A673 (cell line): ENCODE measurements at regions of chr10 and their contacts with region 1.

Region 1: GRCh38 chr10:109203646-109204353 is 719.5 kb downstream of the XPNPEP1 start:
- DNase-seq: peak; percentile 45
- H3K4me3 ChIP-seq: no peak overlapping the region
- H3K27ac ChIP-seq: peak overlapping the region; percentile 74
- H3K4me1 ChIP-seq: peaks cover 53% of the 10 kb centered on the region
- H3K27me3 ChIP-seq: no peaks in the 10 kb centered on the region
- CTCF ChIP-seq: no peak

Region 2: DNA sequence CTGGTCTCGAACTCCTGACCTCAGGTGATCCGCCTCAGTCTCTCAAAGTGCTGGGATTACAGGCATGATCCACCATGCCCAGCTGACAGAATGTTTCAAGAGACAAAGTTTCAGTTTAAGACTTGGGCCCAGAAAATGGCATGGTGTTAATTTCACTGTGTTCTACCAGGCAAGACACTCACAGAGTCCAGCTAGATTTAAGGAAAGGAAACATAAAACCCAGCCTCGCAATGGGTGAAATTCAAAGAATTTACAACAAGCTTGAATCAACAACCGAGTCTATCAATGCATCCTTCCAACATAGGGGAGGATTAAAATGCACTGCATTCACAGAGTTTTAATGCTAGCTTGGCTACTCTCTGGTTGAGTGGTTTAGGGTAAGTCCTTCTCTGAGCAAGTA is 44.4 kb before region 1 on chr10:
- CTCF ChIA-PET with region 1: no interaction called
- POLR2A ChIA-PET with region 1: no interaction called
- intact Hi-C with region 1: no loop called
- DNase-seq: no peak
- H3K4me3 ChIP-seq: no peak overlapping the region
- H3K27ac ChIP-seq: no peak overlapping the region
- H3K4me1 ChIP-seq: no peaks in the 10 kb centered on the region
- H3K27me3 ChIP-seq: no peaks in the 10 kb centered on the region
- CTCF ChIP-seq: no peak

Region 3: DNA sequence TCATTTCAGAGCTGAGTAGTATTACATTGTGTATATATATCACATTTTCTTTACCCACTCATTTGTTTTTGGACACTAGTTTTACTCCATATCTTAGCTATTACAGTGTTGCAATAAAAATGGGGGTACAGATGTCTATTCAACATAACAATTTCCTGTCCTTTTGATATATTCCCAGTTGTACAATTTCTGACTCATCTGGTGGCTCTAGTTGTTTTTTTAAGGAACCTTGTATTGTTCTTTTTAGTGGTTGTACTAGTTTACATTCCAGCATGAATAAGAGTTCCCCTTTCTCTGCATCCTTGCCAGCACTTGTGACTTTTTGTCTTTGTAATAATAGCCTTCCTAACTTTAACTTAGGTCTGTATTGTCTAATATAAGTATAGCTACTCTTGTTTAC is 20.4 kb before region 1 on chr10:
- CTCF ChIA-PET with region 1: no interaction called
- POLR2A ChIA-PET with region 1: no interaction called
- intact Hi-C with region 1: no loop called
- DNase-seq: no peak
- H3K4me3 ChIP-seq: no peak overlapping the region
- H3K27ac ChIP-seq: no peak overlapping the region
- H3K4me1 ChIP-seq: peaks cover 18% of the 10 kb centered on the region
- H3K27me3 ChIP-seq: no peaks in the 10 kb centered on the region
- CTCF ChIP-seq: no peak

Region 4: DNA sequence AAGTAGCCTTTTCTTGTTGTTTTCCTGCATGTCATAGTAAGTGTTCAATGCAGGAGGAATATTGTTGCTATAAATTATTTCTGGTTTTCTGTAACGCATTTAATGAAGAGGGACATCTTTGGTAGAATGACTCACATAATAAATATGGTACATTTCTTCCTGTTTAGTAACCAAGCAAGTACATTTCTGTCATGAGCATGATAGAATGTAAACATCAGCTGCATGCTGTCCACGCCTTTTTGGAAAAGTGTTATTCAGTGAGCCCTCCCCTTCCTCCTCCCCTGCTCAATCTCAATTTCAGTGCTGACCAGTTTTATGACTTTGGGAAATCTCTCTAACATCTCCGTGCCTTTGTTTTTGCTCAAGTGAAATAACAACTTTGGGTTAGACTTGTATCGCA is 55.5 kb after region 1 on chr10:
- CTCF ChIA-PET with region 1: no interaction called
- POLR2A ChIA-PET with region 1: no interaction called
- intact Hi-C with region 1: no loop called
- DNase-seq: no peak
- H3K4me3 ChIP-seq: no peak overlapping the region
- H3K27ac ChIP-seq: no peak overlapping the region
- H3K4me1 ChIP-seq: no peaks in the 10 kb centered on the region
- H3K27me3 ChIP-seq: no peaks in the 10 kb centered on the region
- CTCF ChIP-seq: no peak

Region 5: DNA sequence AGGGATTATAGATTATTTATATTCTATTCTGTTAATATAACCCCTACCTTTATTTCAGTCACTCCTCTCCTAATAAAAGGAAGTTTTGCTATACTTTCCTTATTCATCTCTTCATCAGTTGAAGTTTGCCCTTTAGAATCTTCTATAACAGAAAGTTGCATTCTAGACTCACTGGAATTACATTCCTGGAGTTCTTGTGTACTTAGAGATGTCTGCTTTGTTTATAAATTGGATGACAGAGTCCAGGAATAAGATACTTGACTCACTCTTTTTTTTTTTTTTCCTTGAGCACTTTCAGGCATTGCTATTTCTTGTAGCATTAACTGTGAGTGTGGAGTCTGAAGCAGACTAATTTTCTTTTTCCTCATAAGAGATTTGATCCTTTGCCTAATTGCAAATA is 78.7 kb after region 1 on chr10:
- CTCF ChIA-PET with region 1: interaction called, 14 read pairs
- POLR2A ChIA-PET with region 1: no interaction called
- intact Hi-C with region 1: no loop called
- DNase-seq: no peak
- H3K4me3 ChIP-seq: no peak overlapping the region
- H3K27ac ChIP-seq: no peak overlapping the region
- H3K4me1 ChIP-seq: peaks cover 3% of the 10 kb centered on the region
- H3K27me3 ChIP-seq: no peaks in the 10 kb centered on the region
- CTCF ChIP-seq: no peak

Region 6: GRCh38 chr10:110820321-110820814 is 1616.6 kb after region 1 on chr10:
- CTCF ChIA-PET with region 1: no interaction called
- POLR2A ChIA-PET with region 1: no interaction called
- intact Hi-C with region 1: no loop called
- DNase-seq: no peak
- H3K4me3 ChIP-seq: no peak overlapping the region
- H3K27ac ChIP-seq: no peak overlapping the region
- H3K4me1 ChIP-seq: peaks cover 6% of the 10 kb centered on the region
- H3K27me3 ChIP-seq: no peaks in the 10 kb centered on the region
- CTCF ChIP-seq: no peak